ENCODE measurements at regions of chr16 and their contacts with region 1.

Region 1: GRCh38 chr16:56964243-56965148 is 2.7 kb downstream of the CETP start:
- DNase-seq: peak; percentile 91 to 97 (median 95)
- ATAC-seq: peak; percentile 32 to 74
- H3K4me3 ChIP-seq: no peak overlapping the region
- H3K27ac ChIP-seq: no peak overlapping the region
- H3K4me1 ChIP-seq: peaks cover 7% of the 10 kb centered on the region
- H3K27me3 ChIP-seq: no peaks in the 10 kb centered on the region

Region 2: DNA sequence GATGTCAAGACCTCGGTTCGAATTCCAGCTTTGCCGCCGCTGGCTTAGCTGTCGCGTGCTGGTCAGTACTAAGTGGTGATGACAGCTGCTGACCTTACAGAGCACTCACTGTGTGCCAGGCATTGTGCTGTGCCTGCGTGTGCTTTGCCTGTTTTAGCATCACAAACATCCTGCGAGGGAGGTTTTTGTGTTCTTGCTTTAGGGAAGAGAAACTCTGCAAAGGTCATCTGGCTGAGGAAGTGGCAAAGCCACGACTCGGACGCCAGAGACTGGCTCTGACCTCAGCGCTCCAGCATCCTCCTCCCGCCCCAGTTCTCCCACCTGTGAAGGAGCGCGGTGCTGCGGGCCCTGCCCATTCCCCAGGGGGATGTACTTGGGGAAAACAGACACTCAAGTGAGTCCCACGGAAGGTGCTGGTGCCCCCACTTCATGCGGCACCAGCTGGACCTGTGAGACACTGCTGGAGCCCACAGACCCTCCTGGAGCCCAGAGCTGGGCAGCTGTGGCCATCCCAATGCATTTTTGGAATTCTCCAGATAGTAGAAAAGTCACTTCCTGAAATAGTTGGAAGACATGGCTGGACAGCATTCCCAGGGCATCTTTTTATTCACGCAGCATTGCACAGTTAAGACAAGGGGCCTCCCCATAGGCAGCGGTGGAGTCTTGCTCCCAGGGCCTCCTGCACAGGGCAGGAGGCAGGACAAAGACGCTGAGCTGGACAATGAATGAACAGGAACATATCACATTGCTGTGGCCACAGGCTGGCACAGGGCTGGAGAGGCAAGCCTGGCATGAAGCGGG is 52.5 kb before region 1 on chr16:
- intact Hi-C with region 1: no loop called
- DNase-seq: peak; percentile 43 to 74 (median 74)
- ATAC-seq: peak; percentile 61 to 71
- H3K4me3 ChIP-seq: no peak overlapping the region
- H3K27ac ChIP-seq: peak overlapping the region; percentile 31
- H3K4me1 ChIP-seq: no peaks in the 10 kb centered on the region
- H3K27me3 ChIP-seq: no peaks in the 10 kb centered on the region

Region 3: GRCh38 chr16:57045694-57046381 is 81.3 kb after region 1 on chr16:
- intact Hi-C with region 1: loop called in 1 of 4 experiments (anchors 10 kb)
- DNase-seq: peak; percentile 81 to 92 (median 87)
- ATAC-seq: peak; percentile 79 to 83
- H3K4me3 ChIP-seq: no peak overlapping the region
- H3K27ac ChIP-seq: no peak overlapping the region
- H3K4me1 ChIP-seq: no peaks in the 10 kb centered on the region
- H3K27me3 ChIP-seq: no peaks in the 10 kb centered on the region